Psoas muscle (tissue), 8 donors: ENCODE measurements at regions of chr20 and their contacts with region 1.

Region 1: GRCh38 chr20:62768481-62769287 is 27.6 kb upstream of the MRGBP start:
- DNase-seq: peak; percentile 12 to 28
- ATAC-seq: no peak
- H3K4me3 ChIP-seq: no peak overlapping the region
- H3K27ac ChIP-seq: no peak overlapping the region
- H3K4me1 ChIP-seq: no peaks in the 10 kb centered on the region
- H3K27me3 ChIP-seq: peaks cover 0 to 64% (median 21%) of the 10 kb centered on the region in 3 donors
- CTCF ChIP-seq: no peak

Region 2: GRCh38 chr20:62636446-62636845 is 132.2 kb before region 1 on chr20:
- intact Hi-C with region 1: no loop called
- DNase-seq: no peak
- ATAC-seq: peak in 2 of 4 donors; percentile 28 to 35
- H3K4me3 ChIP-seq: no peak overlapping the region
- H3K27ac ChIP-seq: no peak overlapping the region
- H3K4me1 ChIP-seq: peaks cover under 1% of the 10 kb centered on the region
- H3K27me3 ChIP-seq: peaks cover 0 to 29% (median 2%) of the 10 kb centered on the region in 3 donors
- CTCF ChIP-seq: no peak

Region 3: GRCh38 chr20:62685781-62686555 is 82.7 kb before region 1 on chr20:
- intact Hi-C with region 1: loop called in 1 of 2 experiments (anchors 5 kb)
- DNase-seq: no peak
- ATAC-seq: peak in 1 of 4 donors; percentile 15
- H3K4me3 ChIP-seq: no peak overlapping the region
- H3K27ac ChIP-seq: no peak overlapping the region
- H3K4me1 ChIP-seq: no peaks in the 10 kb centered on the region
- H3K27me3 ChIP-seq: peaks cover 0 to 47% (median 13%) of the 10 kb centered on the region in 3 donors
- CTCF ChIP-seq: no peak

Region 4: DNA sequence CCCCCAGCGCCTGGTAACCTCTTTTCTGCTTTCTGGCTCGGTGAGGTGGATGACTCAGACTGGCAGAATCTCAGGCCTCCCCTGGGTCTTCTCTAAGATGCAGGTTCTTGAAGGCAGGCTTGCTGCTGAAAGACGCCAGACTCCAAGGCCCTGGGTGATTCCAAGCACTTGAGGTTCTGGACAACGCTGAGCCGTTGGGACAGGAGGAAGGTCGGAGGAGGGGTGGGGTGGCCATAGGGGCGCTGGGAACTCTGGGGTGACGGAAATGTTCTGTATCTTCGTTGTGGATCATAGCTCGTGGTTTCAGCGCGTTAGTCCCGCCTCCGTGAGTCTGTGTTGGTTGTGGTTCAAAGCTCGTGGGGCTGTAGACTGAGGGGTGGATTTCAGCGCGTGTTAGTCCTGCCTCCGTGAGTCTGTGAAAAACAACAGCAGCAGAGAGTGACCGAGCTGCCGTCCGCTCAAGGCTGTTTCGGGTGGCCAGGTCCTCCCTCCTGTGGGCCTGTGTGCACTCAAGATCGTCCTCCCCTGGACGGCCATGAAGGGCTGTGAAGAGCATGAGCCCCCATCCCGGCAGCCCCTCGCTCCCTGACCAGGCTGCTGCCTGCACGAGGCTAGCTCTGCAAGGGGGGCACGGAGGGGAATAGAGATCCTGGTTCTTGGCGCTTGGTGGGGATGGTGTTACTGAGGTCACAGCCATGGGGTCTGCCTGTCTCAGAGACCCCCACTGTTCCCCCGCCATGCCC is 52.3 kb before region 1 on chr20:
- intact Hi-C with region 1: loop called in 1 of 2 experiments (anchors 5 kb)
- DNase-seq: no peak
- ATAC-seq: no peak
- H3K4me3 ChIP-seq: no peak overlapping the region
- H3K27ac ChIP-seq: no peak overlapping the region
- H3K4me1 ChIP-seq: no peaks in the 10 kb centered on the region
- H3K27me3 ChIP-seq: peaks cover 0 to 38% (median 10%) of the 10 kb centered on the region in 3 donors
- CTCF ChIP-seq: no peak

Region 5: GRCh38 chr20:62822788-62823651 is 54.3 kb after region 1 on chr20:
- intact Hi-C with region 1: no loop called
- DNase-seq: no peak
- ATAC-seq: no peak
- H3K4me3 ChIP-seq: no peak overlapping the region
- H3K27ac ChIP-seq: no peak overlapping the region
- H3K4me1 ChIP-seq: peaks cover 6% of the 10 kb centered on the region
- H3K27me3 ChIP-seq: peaks cover 0 to 36% (median 9%) of the 10 kb centered on the region in 3 donors
- CTCF ChIP-seq: no peak